K562 (cell line): ENCODE measurements at regions of chr15 and their contacts with region 1.

Region 1: GRCh38 chr15:81106560-81106959 is 27.5 kb upstream of the CFAP161 start:
- DNase-seq: peak; percentile 49 to 86 (median 62)
- ATAC-seq: peak; percentile 76
- H3K4me3 ChIP-seq: no peak overlapping the region
- H3K27ac ChIP-seq: peak overlapping the region; percentile 69
- H3K4me1 ChIP-seq: peaks cover 8 to 24% of the 10 kb centered on the region in 2 experiments
- H3K27me3 ChIP-seq: no peaks in the 10 kb centered on the region
- CTCF ChIP-seq: peak; percentile 75 to 89 (median 76)
- EP300 ChIP-seq: no peak
- POLR2A ChIP-seq: no peak
- RAD21 ChIP-seq: peak; percentile 72 to 81

Region 2: DNA sequence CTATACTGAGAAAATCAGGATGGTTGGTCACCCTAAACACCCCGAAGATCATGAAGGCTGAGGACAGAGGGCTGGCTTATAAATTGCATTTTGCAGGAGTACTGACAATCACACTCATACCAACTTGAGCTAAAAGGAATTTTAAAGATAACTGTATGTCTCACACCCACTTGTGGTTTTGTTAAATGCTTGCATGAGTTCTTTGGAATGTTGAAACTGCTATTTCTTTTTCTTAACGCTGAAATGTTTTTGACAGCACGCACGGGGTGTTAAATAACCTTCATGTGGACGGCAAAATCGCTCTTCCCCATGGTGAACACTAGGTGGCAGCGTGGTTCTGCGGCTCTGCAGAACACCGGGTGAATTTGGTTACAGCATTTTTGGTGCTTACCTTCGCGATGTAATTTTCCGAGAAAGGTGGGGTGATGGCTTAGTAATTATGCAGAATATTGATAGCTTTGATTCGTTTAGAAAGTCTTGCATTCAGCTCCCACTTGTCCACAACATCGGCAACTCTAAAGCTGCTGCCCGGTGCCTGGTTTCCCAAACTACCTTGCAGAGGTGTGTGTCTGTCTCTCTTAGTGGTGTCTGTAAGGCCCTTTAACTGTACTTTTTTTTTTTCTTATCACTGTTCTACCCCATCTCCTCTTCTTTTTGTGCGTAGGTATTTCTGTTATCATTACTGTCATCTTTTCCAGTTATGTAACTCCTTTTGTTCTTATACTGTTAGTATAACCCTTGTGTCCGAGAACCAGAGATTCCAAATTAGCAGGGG is 650.7 kb before region 1 on chr15:
- CTCF ChIA-PET with region 1: no interaction called
- POLR2A ChIA-PET with region 1: no interaction called
- in situ Hi-C with region 1: loop called (anchors 25 kb)
- intact Hi-C with region 1: loop called (anchors 5 kb)
- DNase-seq: peak; percentile 69 to 71 (median 71)
- ATAC-seq: peak; percentile 87
- H3K4me3 ChIP-seq: no peak overlapping the region
- H3K27ac ChIP-seq: no peak overlapping the region
- H3K4me1 ChIP-seq: no peaks in the 10 kb centered on the region
- H3K27me3 ChIP-seq: peaks cover 0 to 25% of the 10 kb centered on the region in 2 experiments; a peak in 2 of 5 replicates
- CTCF ChIP-seq: peak; percentile 86 to 95 (median 92)
- EP300 ChIP-seq: no peak
- POLR2A ChIP-seq: no peak
- RAD21 ChIP-seq: peak; percentile 82 to 86

Region 3: GRCh38 chr15:80996247-80996646 is 110.3 kb before region 1 on chr15:
- CTCF ChIA-PET with region 1: no interaction called
- POLR2A ChIA-PET with region 1: no interaction called
- in situ Hi-C with region 1: loop called (anchors 5 kb)
- intact Hi-C with region 1: loop called (anchors 2 kb)
- DNase-seq: peak; percentile 27 to 67 (median 36)
- ATAC-seq: no peak
- H3K4me3 ChIP-seq: no peak overlapping the region
- H3K27ac ChIP-seq: no peak overlapping the region
- H3K4me1 ChIP-seq: peaks cover 11 to 19% of the 10 kb centered on the region in 2 experiments
- H3K27me3 ChIP-seq: no peaks in the 10 kb centered on the region
- CTCF ChIP-seq: peak; percentile 65 to 76 (median 75)
- EP300 ChIP-seq: no peak
- POLR2A ChIP-seq: no peak
- RAD21 ChIP-seq: peak; percentile 40 to 84; a peak in 3 of 4 replicates

Region 4: DNA sequence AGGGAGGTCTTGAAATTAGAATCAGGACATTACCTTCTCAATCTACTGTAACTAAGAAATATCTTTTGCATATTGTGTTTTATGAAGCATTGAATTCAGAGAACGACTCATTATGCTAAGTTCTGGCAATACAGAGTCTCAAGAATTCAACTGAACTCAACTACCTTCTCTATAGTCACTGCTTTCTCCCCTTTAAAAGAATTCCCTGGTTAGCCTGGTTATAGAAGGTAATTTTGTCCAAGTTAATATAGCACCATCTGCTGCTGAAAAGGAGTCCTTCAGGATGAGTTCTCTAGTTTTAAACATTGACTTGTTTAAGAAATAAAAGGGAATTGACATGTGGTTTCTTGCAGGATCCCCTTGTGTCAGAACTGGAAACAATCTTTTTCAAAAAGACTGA is 150.4 kb after region 1 on chr15:
- CTCF ChIA-PET with region 1: interaction called, 5 read pairs
- POLR2A ChIA-PET with region 1: no interaction called
- in situ Hi-C with region 1: no loop called
- intact Hi-C with region 1: loop called (anchors 1 kb)
- DNase-seq: peak in 2 of 4 experiments; percentile 27 to 30
- ATAC-seq: peak; percentile 78
- H3K4me3 ChIP-seq: no peak overlapping the region
- H3K27ac ChIP-seq: no peak overlapping the region
- H3K4me1 ChIP-seq: peaks cover 0 to 3% of the 10 kb centered on the region in 2 experiments; a peak in 2 of 5 replicates
- H3K27me3 ChIP-seq: no peaks in the 10 kb centered on the region
- CTCF ChIP-seq: peak; percentile 40 to 70 (median 41); a peak in 4 of 6 replicates
- EP300 ChIP-seq: no peak
- POLR2A ChIP-seq: no peak
- RAD21 ChIP-seq: peak; percentile 75

Region 5: GRCh38 chr15:81323944-81324881 is 217.7 kb after region 1 on chr15 and contains the start of gene STARD5:
- CTCF ChIA-PET with region 1: no interaction called
- POLR2A ChIA-PET with region 1: no interaction called
- in situ Hi-C with region 1: no loop called
- intact Hi-C with region 1: loop called (anchors 5 kb)
- DNase-seq: peak; percentile 98
- ATAC-seq: peak; percentile 100
- H3K4me3 ChIP-seq: peak within 1 kb of the TSS; percentile 69
- H3K27ac ChIP-seq: peak within 1 kb of the TSS; percentile 54
- H3K4me1 ChIP-seq: peaks cover 11 to 12% of the 10 kb centered on the region in 2 experiments; a peak in 4 of 5 replicates
- H3K27me3 ChIP-seq: no peaks in the 10 kb centered on the region
- CTCF ChIP-seq: no peak
- EP300 ChIP-seq: no peak
- POLR2A ChIP-seq: peak; percentile 80
- RAD21 ChIP-seq: no peak
- polyA plus RNA-seq, gene STARD5: 1.8 to 2.1 TPM